ENCODE measurements at regions of chr18 and their contacts with region 1.

Region 1: GRCh38 chr18:37341473-37342086 is 224.0 kb downstream of the CELF4 start:
- DNase-seq: no peak
- ATAC-seq: no peak
- H3K4me3 ChIP-seq: no peak overlapping the region
- H3K27ac ChIP-seq: no peak overlapping the region
- H3K4me1 ChIP-seq: no peaks in the 10 kb centered on the region
- H3K27me3 ChIP-seq: peaks cover 21% of the 10 kb centered on the region; the same call in 1 of the 2 replicates
- CTCF ChIP-seq: no peak
- POLR2A ChIP-seq: no peak
- RAD21 ChIP-seq: no peak

Region 2: DNA sequence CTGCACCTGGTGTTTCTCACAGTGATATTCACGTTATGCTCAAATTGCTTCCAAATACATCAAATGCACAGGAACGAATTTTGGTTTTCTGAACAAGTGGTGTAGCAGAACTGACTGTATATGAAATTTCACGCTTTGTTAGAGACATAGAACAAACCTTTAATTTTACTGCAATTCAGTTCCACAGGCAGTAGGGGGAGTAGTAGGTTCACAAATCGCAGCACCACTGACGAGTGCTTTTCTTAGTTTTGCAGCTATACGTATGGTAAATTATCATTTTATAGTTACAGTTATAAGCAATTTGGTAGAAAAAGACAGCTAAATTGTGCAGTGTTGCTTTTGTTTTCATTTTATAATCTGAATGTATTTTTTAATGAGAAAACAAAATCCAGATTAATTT is 399.3 kb before region 1 on chr18:
- CTCF ChIA-PET with region 1: interaction called, 7 read pairs
- POLR2A ChIA-PET with region 1: no interaction called
- RAD21 ChIA-PET with region 1: no interaction called
- intact Hi-C with region 1: loop called (anchors 2 kb)
- DNase-seq: peak; percentile 18
- ATAC-seq: peak; percentile 76
- H3K4me3 ChIP-seq: no peak overlapping the region
- H3K27ac ChIP-seq: no peak overlapping the region
- H3K4me1 ChIP-seq: peaks cover 0 to 4% of the 10 kb centered on the region in 2 experiments; a peak in 1 of 4 replicates
- H3K27me3 ChIP-seq: no peaks in the 10 kb centered on the region
- CTCF ChIP-seq: peak; percentile 45 to 90 (median 74); a peak in 5 of 6 replicates
- POLR2A ChIP-seq: no peak
- RAD21 ChIP-seq: peak; percentile 73

Region 3: GRCh38 chr18:37253394-37254235 is 88.0 kb before region 1 on chr18:
- CTCF ChIA-PET with region 1: no interaction called
- POLR2A ChIA-PET with region 1: no interaction called
- RAD21 ChIA-PET with region 1: no interaction called
- intact Hi-C with region 1: no loop called
- DNase-seq: no peak
- ATAC-seq: no peak
- H3K4me3 ChIP-seq: no peak overlapping the region
- H3K27ac ChIP-seq: no peak overlapping the region
- H3K4me1 ChIP-seq: no peaks in the 10 kb centered on the region; a peak in 1 of 4 replicates
- H3K27me3 ChIP-seq: peaks cover 18% of the 10 kb centered on the region
- CTCF ChIP-seq: no peak
- POLR2A ChIP-seq: no peak
- RAD21 ChIP-seq: no peak

Region 4: GRCh38 chr18:37328946-37329719 is 12.4 kb before region 1 on chr18:
- CTCF ChIA-PET with region 1: no interaction called
- POLR2A ChIA-PET with region 1: no interaction called
- RAD21 ChIA-PET with region 1: no interaction called
- intact Hi-C with region 1: no loop called
- DNase-seq: no peak
- ATAC-seq: no peak
- H3K4me3 ChIP-seq: no peak overlapping the region
- H3K27ac ChIP-seq: no peak overlapping the region
- H3K4me1 ChIP-seq: no peaks in the 10 kb centered on the region
- H3K27me3 ChIP-seq: no peaks in the 10 kb centered on the region
- CTCF ChIP-seq: no peak
- POLR2A ChIP-seq: no peak
- RAD21 ChIP-seq: no peak